Lower leg skin (tissue), 4 donors: ENCODE measurements at regions of chr11 and their contacts with region 1.

Region 1: GRCh38 chr11:77091146-77091940 is 11.3 kb upstream of the OMP start:
- DNase-seq: peak; percentile 78 to 96
- H3K4me3 ChIP-seq: no peak overlapping the region
- CTCF ChIP-seq: peak in 1 of 3 donors; percentile 88
- POLR2A ChIP-seq: no peak

Region 2: DNA sequence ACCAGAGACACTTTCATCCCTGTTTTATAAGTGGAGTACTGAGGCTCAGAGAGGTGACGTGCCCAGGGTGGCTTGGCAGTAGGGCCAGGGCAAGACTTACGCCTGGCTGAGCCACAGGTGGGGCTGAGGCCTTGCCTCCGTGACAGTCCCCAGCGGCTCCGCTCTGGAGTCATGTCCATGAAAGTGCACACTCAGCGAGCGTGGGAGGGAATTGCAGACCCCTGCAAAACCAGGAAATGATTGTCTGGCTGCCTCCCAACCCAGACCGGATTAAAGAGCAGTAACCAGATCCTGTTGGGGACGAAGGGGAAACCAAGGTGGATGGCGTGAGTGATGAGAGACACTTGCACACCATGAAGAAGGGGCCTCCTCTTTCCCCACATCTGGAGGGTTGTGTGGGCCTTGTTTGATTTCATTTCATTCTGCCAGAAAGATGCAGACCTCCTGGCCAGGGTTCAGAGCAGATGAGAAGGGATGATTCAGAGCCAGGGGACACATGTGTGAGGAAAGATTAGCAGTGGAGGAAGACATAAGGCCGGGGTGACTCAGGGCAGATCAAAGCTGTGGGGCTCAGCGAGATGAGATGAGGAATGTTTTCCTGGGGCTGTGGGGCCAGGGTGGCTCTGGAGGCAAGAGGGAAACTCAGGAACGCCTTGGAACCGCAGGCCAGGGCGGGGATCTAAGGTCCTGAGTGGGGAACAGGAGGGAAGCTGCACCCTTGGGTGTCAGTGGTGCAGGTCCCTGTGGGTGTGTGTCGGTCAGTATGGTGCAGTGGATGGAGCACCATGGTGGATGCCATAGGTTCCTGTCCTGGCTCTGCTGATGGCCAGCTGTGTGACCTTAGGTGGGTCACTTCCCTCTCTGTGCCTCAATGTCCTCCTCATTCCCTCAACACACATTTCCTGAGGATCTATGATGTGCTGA is 390.9 kb before region 1 on chr11:
- intact Hi-C with region 1: no loop called
- DNase-seq: peak; percentile 79 to 91
- H3K4me3 ChIP-seq: no peak overlapping the region
- CTCF ChIP-seq: no peak
- POLR2A ChIP-seq: no peak

Region 3: DNA sequence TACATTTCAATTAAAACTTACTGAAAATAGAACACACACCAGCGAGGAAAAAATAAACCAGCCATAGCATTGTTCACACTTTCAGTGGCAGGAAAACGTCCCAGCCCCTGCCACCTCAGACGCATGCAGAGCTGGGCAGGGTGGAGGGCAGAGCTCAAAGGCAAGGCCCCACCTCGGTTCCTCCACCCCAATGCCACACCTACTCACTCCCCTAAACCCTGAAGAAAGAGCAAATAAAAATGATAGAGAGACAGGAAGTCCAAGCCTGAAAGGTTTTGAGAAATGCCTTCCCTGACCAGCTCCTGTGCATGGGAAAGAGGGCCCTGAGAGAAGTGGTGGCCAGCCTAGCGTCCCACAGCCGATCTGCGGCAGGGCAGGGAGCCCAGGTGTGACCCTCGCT is 42.3 kb before region 1 on chr11:
- intact Hi-C with region 1: loop called (anchors 2 kb)
- DNase-seq: peak in 1 of 2 donors; percentile 31
- H3K4me3 ChIP-seq: no peak overlapping the region
- CTCF ChIP-seq: no peak
- POLR2A ChIP-seq: no peak